ENCODE measurements at regions of chr6 and their contacts with region 1.

Region 1: GRCh38 chr6:11064836-11065235 is 20.7 kb upstream of the ELOVL2 start:
- DNase-seq: no peak
- H3K4me3 Mint-ChIP-seq: no peak overlapping the region
- H3K27ac Mint-ChIP-seq: no peak overlapping the region
- H3K4me1 Mint-ChIP-seq: no peaks in the 10 kb centered on the region
- H3K27me3 Mint-ChIP-seq: peaks cover 6% of the 10 kb centered on the region

Region 2: DNA sequence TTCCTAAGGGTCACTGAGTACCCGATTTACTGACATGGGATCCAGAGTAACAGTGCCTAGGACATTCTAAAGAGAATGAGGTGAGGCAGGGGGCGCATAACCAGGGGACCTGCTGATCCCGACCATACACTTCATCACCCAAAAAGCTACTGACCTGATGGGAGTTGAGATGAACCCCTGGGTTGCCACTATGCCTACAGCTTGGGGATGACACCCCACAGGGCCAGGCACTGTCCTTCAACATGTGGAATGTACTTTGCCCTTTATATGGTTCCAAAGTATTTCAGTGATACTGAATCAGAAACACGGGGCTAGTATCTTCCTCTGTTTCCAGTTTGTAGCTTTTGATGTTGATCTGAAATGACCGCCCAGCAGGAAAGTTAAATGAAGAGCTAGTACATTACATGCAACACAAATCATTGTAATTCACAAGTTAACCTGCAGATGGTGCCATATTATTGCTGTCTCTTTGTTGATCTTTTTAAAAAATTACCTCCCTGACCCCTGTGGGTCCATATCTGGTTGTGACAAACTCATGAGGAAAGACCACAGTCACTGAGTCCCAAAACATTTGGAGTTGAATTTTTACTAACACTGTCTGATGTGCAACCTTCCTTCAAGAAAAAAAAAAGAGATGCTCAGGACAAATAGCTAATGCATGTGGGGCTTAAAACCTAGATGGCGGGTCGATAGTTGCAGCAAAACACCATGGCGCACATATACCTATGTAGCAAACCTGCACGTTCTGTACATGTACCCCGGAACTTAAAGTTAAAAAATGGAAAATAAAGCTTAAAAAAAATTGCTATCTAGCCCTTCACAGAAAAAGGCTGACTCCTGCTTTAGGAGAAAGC is 586.4 kb before region 1 on chr6:
- CTCF ChIA-PET with region 1: interaction called, 25 read pairs
- POLR2A ChIA-PET with region 1: no interaction called
- intact Hi-C with region 1: loop called (anchors 2 kb)
- DNase-seq: no peak
- H3K4me3 Mint-ChIP-seq: no peak overlapping the region
- H3K27ac Mint-ChIP-seq: no peak overlapping the region
- H3K4me1 Mint-ChIP-seq: no peaks in the 10 kb centered on the region
- H3K27me3 Mint-ChIP-seq: peaks cover 9% of the 10 kb centered on the region

Region 3: DNA sequence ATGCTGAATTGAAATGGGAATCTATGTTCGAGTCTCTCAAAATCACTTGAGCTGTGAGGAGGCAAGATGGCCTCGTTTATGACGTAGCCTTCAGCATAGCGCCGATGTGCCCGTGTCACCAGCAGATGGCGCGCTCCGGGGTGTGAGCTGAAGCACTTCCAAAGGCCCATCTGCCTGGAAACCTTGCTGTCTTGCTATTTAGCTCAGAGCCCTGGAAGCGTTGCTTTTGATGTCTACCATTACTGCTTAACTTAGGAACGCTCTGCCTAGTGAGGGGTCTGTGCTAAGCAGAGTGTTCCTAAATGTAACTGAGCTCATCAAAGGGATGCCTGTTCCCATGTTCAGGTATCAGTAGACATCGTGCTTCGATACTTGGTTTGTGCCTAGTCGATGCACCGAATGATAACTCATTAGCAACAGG is 110.2 kb before region 1 on chr6:
- CTCF ChIA-PET with region 1: interaction called, 34 read pairs
- POLR2A ChIA-PET with region 1: no interaction called
- intact Hi-C with region 1: loop called (anchors 1 kb)
- DNase-seq: peak; percentile 83
- H3K4me3 Mint-ChIP-seq: no peak overlapping the region
- H3K27ac Mint-ChIP-seq: no peak overlapping the region
- H3K4me1 Mint-ChIP-seq: no peaks in the 10 kb centered on the region
- H3K27me3 Mint-ChIP-seq: peaks cover 12% of the 10 kb centered on the region

Region 4: DNA sequence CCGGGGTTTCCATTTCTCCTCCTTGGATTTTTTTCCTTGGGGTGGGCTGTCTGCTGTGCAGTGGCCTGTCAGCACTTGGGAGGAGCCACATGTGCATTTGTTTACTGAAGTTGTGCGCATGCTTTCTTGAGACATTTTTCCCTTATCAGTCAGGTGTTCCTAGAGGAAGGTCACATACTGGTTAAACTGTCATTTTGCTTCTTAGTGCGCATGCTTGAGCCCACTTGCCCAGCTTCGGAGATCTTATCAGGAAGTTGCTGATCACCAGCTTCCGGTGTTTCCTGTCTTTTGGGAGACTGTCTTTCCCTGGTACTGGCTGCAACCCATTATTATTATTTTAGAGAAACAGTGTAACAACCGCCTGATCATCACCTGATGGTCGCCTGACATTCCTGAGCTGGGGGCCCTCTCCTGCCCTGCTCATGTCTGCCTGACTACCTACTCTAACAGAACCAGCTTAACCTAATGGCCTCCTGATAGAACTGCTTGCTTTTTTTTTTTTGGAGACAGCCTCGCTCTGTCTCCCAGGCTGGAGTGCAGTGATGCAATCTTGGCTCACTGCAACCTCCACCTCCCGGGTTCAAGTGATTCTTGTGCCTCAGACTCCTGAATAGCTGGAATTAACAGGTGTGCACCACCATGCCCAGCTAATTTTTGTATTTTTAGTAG is 47.1 kb after region 1 on chr6:
- CTCF ChIA-PET with region 1: no interaction called
- POLR2A ChIA-PET with region 1: no interaction called
- intact Hi-C with region 1: no loop called
- DNase-seq: no peak
- H3K4me3 Mint-ChIP-seq: peak overlapping the region; percentile 23
- H3K27ac Mint-ChIP-seq: no peak overlapping the region
- H3K4me1 Mint-ChIP-seq: peaks cover 32% of the 10 kb centered on the region
- H3K27me3 Mint-ChIP-seq: no peaks in the 10 kb centered on the region